Heart left ventricle (tissue), 16 donors: ENCODE measurements at regions of chr11 and their contacts with region 1.

Region 1: DNA sequence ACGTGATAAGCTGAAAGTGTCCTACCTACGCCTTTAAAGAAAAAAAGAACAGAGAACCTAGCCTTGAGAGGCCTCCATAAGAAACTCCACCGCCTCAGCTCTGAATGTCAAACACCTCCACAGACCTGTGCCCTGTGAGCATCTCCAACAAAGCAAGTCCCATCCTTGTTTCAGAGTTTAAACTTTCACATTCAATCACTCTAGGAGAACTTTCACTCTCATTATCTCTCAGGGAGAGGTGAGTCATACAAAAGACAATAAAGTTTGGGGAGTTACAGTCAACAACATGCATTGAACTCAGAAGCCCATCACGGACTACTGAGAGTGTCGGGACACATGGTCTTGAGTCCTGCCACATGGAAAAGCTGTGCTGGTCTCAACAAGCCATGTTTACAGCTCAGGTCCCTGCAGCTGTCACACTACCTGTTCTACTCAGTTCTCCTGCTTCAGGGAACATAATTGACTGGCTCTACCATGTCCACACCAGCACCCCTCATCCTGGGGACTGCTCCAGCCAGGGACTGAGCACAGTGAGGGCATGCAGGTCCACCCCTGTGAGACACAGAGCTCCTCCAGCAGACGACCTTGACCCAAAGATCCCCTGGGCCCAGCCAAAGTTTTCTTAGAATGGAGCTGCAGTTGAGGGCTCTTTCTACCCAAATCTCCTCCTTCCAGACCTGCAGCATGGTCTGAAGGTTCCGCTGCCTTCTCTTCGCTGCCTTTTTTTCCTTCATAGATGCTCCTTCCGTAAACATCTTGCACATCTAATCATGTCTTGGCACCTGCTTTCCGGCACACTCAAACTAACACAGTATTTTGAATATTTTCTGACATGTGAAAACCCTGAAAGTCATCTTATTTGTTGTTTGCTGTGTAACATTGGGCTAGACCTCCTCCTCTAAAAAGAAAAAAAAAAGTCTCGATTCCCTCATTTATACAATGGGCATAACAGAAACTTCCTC is 114.9 kb downstream of the ETS1 start:
- DNase-seq: no peak
- ATAC-seq: peak in 1 of 4 donors; percentile 9
- H3K4me3 ChIP-seq: peak overlapping the region in 1 of 12 donors; percentile 6
- H3K27ac ChIP-seq: peak overlapping the region in 7 of 12 donors; percentile 0 to 83 (median 35)
- H3K4me1 ChIP-seq: peaks cover 17 to 100% (median 90%) of the 10 kb centered on the region in 12 donors
- H3K27me3 ChIP-seq: no peaks in the 10 kb centered on the region
- CTCF ChIP-seq: no peak
- POLR2A ChIP-seq: no peak

Region 2: GRCh38 chr11:128052912-128053641 is 419.3 kb before region 1 on chr11:
- intact Hi-C with region 1: no loop called
- DNase-seq: no peak
- ATAC-seq: peak in 1 of 4 donors; percentile 41
- H3K4me3 ChIP-seq: no peak overlapping the region
- H3K27ac ChIP-seq: peak overlapping the region in 1 of 12 donors; percentile 50
- H3K4me1 ChIP-seq: peaks cover 0 to 37% (median 0%) of the 10 kb centered on the region in 12 donors
- H3K27me3 ChIP-seq: no peaks in the 10 kb centered on the region
- CTCF ChIP-seq: no peak
- POLR2A ChIP-seq: no peak

Region 3: DNA sequence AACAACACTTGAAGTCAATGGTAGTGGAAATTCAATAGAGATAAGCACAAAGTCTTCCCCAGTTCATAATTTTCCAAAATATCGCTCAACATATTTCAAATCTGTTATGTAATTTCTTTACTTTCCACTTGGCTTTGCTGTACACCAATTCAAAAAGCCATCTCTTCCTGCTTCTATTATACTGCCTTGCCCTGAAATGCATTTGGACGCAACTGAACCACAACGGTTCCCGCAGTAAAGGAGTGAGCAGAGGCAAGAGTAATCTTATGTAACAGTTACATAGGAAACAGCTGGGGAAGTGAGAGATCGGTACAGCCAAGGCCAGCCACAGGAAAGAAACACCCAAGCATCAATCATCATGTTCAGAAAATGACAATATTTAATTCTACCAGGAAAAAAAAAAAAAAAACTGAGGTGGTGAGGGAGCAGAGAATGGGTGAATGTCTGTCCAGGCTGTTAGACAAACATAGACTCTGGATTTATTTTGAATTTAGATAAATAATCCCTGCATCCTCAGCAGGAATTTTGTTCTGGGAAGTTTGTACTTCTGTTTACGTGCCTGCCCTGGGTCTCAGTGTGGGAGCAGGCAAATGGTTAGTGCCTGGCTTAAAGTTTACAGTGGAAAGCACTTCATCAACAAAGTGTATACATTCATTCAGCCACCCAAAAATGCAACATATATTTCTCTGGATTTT is 277.2 kb before region 1 on chr11:
- intact Hi-C with region 1: loop called in 1 of 10 experiments (anchors 10 kb)
- DNase-seq: no peak
- ATAC-seq: peak; percentile 54 to 81 (median 60)
- H3K4me3 ChIP-seq: no peak overlapping the region
- H3K27ac ChIP-seq: no peak overlapping the region
- H3K4me1 ChIP-seq: peaks cover 0 to 18% (median 2%) of the 10 kb centered on the region in 12 donors
- H3K27me3 ChIP-seq: no peaks in the 10 kb centered on the region
- CTCF ChIP-seq: peak in 2 of 12 donors; percentile 6 to 29
- POLR2A ChIP-seq: no peak

Region 4: GRCh38 chr11:128336203-128336602 is 136.2 kb before region 1 on chr11:
- intact Hi-C with region 1: loop called in 2 of 10 experiments (anchors 5 to 10 kb)
- DNase-seq: peak; percentile 48 to 78 (median 50)
- ATAC-seq: peak in 3 of 4 donors; percentile 54 to 85 (median 78)
- H3K4me3 ChIP-seq: no peak overlapping the region
- H3K27ac ChIP-seq: peak overlapping the region in 9 of 12 donors; percentile 14 to 85 (median 74)
- H3K4me1 ChIP-seq: peaks cover 0 to 45% (median 23%) of the 10 kb centered on the region in 12 donors
- H3K27me3 ChIP-seq: no peaks in the 10 kb centered on the region
- CTCF ChIP-seq: no peak
- POLR2A ChIP-seq: no peak

Region 5: GRCh38 chr11:128422576-128423370 is 49.6 kb before region 1 on chr11:
- intact Hi-C with region 1: loop called in 2 of 10 experiments (anchors 5 to 10 kb)
- DNase-seq: peak in 4 of 5 donors; percentile 42 to 71 (median 53)
- ATAC-seq: peak; percentile 14 to 80 (median 68)
- H3K4me3 ChIP-seq: no peak overlapping the region
- H3K27ac ChIP-seq: peak overlapping the region in 9 of 12 donors; percentile 19 to 90 (median 71)
- H3K4me1 ChIP-seq: peaks cover 8 to 45% (median 34%) of the 10 kb centered on the region in 12 donors
- H3K27me3 ChIP-seq: no peaks in the 10 kb centered on the region
- CTCF ChIP-seq: no peak
- POLR2A ChIP-seq: no peak

Region 6: GRCh38 chr11:128522055-128522942 is 49.9 kb after region 1 on chr11:
- intact Hi-C with region 1: loop called in 4 of 10 experiments (anchors 5 to 10 kb)
- DNase-seq: peak; percentile 95 to 97 (median 96)
- ATAC-seq: peak; percentile 93 to 99 (median 96)
- H3K4me3 ChIP-seq: peak overlapping the region; percentile 63 to 93 (median 83)
- H3K27ac ChIP-seq: peak overlapping the region; percentile 94 to 98 (median 96)
- H3K4me1 ChIP-seq: peaks cover 8 to 74% (median 42%) of the 10 kb centered on the region in 12 donors
- H3K27me3 ChIP-seq: no peaks in the 10 kb centered on the region
- CTCF ChIP-seq: peak in 1 of 12 donors; percentile 5
- POLR2A ChIP-seq: peak; percentile 79 to 97